Panc1 (cell line): ENCODE measurements at regions of chr2 and their contacts with region 1.

Region 1: DNA sequence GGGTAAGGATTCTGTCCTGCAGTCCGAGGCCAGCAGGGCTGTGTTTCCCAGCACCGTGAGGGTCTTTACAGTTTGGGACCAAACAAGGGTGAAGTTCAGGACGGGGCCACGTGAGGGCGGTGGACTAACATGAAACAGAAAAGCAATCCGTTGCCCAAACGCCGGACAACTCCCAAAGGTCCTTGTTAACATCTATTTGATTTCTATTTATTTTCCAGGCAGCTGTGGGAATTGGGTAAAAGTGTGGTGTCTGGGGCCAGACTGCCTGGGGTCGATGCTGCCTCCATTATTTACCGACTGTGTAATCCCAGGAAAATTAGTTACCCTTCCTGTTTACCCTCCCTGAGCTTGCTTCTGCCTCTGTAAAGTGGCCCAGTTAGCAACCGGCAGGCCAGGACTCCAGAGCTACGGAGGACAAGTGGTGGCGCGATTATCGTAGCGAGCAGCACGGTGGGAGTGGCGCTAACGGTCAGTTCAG is 66.3 kb upstream of the TCF7L1 start:
- DNase-seq: peak; percentile 63
- ATAC-seq: peak; percentile 95
- H3K4me3 ChIP-seq: peak overlapping the region; percentile 27 to 42
- H3K27ac ChIP-seq: peak overlapping the region; percentile 71
- H3K4me1 ChIP-seq: peaks cover 8% of the 10 kb centered on the region
- H3K27me3 ChIP-seq: no peaks in the 10 kb centered on the region
- CTCF ChIP-seq: peak; percentile 92

Region 2: DNA sequence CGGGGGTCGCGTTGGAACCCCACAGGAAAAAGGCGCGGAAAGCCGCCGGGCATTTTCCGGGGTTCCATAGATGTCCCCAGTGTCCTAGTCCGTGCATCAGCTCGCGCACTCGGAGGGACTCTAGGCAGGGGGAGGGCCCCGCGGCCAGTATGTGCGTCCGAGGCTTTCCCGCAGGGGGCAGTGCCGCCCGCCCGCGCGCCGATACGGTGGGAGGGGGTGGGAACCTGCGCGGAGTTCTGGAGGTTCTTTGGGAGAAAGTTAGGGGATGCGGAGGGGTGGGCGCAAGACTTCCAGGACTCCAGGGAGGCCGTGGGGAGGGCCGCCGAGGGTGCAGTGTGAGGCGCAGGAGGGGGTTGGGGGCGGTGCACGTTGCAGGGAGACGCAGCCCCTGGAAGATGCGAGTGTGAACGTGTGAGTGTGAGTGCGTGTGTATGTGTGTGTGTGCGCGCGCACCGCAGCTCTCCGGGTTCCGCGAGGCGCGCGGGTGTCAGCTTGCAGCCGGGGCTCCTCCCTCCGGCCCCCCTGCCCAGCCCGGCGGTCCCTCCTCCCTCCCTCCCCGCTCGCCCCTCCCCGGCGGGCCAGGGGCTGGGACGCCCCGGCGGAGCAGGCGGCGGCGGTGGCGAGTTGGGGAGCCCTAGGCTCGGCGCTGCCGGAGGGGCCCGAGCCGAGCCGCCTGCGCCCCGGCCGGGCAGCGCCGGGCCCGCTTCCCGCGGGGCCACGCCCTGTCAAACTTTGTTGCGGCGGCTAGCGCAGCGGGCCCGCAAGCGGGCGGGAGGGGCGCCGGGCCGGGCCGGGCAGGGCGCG is 66.1 kb after region 1 on chr2 and contains the start of gene TCF7L1:
- CTCF ChIA-PET with region 1: no interaction called
- POLR2A ChIA-PET with region 1: no interaction called
- in situ Hi-C with region 1: no loop called
- intact Hi-C with region 1: loop called (anchors 2 kb)
- DNase-seq: peak; percentile 15
- ATAC-seq: peak; percentile 94
- H3K4me3 ChIP-seq: peak within 1 kb of the TSS; percentile 61 to 66
- H3K27ac ChIP-seq: peak within 1 kb of the TSS; percentile 80
- H3K4me1 ChIP-seq: peaks cover 11% of the 10 kb centered on the region
- H3K27me3 ChIP-seq: no peaks in the 10 kb centered on the region
- CTCF ChIP-seq: peak; percentile 95
- total RNA-seq, gene TCF7L1: 30.4 TPM

Region 3: DNA sequence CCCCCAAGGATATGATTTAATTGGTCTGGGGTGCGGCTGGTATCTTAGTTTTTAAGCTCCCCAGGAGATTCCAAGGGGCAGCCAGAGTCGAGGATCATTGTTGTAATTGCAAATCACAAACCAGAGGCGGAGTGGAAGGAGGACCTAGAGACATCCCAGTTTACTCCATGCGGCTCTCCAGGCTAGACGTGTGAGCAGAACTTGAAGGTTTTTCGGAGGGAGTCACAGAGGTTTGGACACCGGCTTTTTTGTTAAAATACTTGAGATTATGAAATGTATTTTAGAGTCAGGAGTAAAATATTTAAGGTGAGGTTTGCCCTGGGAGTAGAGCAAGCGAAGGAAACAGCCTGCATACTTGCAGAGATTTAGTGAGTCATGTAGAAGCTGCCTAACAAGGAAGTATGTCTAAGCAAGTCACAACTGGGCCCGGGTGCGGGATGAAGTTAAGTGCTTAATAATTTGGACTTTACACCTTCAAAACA is 221.4 kb after region 1 on chr2:
- CTCF ChIA-PET with region 1: interaction called, 14 read pairs
- POLR2A ChIA-PET with region 1: no interaction called
- in situ Hi-C with region 1: no loop called
- intact Hi-C with region 1: no loop called
- DNase-seq: no peak
- ATAC-seq: no peak
- H3K4me3 ChIP-seq: no peak overlapping the region
- H3K27ac ChIP-seq: no peak overlapping the region
- H3K4me1 ChIP-seq: peaks cover 10% of the 10 kb centered on the region; the same call in 1 of the 2 replicates
- H3K27me3 ChIP-seq: no peaks in the 10 kb centered on the region
- CTCF ChIP-seq: no peak

Region 4: GRCh38 chr2:85302121-85302520 is 235.2 kb after region 1 on chr2:
- CTCF ChIA-PET with region 1: interaction called, 29 read pairs
- POLR2A ChIA-PET with region 1: interaction called, 6 read pairs
- in situ Hi-C with region 1: no loop called
- intact Hi-C with region 1: loop called (anchors 1 kb)
- DNase-seq: no peak
- ATAC-seq: no peak
- H3K4me3 ChIP-seq: no peak overlapping the region
- H3K27ac ChIP-seq: no peak overlapping the region
- H3K4me1 ChIP-seq: peaks cover 4% of the 10 kb centered on the region
- H3K27me3 ChIP-seq: no peaks in the 10 kb centered on the region
- CTCF ChIP-seq: no peak

Region 5: DNA sequence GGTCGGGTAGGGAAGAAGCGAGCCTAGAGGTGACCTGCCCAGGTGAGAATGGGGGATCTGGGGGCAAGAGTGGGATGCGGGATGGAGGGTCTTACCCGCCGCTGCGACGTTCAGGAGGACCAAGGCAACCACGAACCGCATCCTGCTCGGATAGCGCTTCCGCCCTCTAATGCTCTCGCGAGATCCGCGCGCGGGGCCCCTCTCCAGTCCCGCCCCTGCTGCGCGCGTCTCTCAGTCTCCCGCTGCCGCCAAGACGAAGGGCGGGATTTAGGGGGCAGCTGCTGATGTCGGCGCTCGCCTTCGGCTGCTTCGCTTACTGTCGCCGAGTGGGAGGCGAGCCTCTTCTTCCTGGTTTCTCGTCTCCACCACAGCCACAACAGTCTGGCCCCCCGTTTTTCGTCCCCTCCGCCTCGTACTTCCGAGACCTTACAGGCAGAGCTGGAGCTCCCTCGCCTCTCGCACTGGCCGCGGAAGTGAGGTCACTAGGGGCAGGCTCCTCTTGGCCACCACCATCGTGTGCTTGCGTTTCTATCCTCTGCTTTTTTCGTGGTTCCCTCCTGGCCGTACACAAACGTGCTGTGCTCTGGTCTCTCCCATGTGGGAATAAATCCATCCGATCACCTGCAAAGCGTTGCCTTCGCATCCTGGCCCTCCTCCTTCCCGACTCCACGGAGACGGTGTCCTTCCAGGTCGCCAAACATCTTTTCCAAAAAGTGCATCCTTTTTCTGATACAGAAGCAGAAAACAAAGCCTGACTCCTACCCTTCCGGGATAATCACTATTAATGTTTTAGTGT is 261.1 kb after region 1 on chr2 and contains the start of gene TGOLN2:
- CTCF ChIA-PET with region 1: no interaction called
- POLR2A ChIA-PET with region 1: no interaction called
- in situ Hi-C with region 1: no loop called
- intact Hi-C with region 1: no loop called
- DNase-seq: peak; percentile 79
- ATAC-seq: peak; percentile 99
- H3K4me3 ChIP-seq: peak within 1 kb of the TSS; percentile 83 to 88
- H3K27ac ChIP-seq: peak within 1 kb of the TSS; percentile 93
- H3K4me1 ChIP-seq: peaks cover 12% of the 10 kb centered on the region
- H3K27me3 ChIP-seq: no peaks in the 10 kb centered on the region
- CTCF ChIP-seq: no peak
- total RNA-seq, gene TGOLN2: 178 TPM